ENCODE measurements at regions of chr6 and their contacts with region 1.

Region 1: DNA sequence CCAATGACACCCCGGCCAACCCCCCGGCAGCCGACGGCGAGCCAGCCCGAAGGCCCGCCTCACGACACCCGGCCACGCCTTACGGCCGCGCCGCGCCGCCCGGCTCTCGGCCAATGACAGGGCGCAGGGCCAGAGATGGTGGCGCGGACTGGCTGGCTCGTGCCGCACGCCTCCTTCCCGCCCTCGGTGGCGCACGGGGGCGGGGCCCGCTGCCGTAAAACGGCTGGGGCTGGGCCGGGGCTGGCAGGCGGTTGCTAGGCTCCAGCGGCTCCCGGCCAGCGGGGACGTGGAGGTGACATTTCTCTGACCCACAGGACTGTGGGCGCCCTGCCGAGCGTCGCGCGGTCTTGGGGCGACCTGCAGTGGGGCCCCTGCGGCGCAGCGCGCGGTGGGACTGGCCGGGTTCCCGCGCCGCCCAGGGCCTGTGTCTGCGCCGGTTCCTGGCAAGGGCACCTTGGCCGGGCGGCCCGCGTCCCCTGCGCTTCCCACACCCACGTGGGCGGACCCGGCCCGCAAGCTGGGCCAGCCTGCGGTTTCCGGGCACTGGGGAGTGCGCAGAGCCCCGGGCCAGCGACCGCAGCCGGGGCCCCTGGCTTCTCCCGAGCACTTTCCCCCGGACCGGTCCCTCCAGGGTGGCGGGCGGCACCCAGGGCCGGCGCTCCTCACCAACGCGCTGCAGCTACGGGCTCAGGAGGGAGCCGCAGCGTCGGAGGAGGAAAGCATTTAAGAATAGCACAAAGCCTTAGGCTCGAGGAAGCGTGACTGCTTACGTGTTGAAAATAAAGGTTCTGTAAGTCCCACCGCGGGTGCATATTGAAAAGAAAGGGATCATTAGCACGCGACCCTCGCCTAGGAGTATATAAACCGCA is at the start of gene MPC1:
- DNase-seq: peak in 1 of 2 donors; percentile 96
- H3K4me3 ChIP-seq: peak within 1 kb of the TSS; percentile 91 to 95
- H3K27ac ChIP-seq: peak within 1 kb of the TSS; percentile 89
- H3K4me1 ChIP-seq: peaks cover 18% of the 10 kb centered on the region
- H3K27me3 ChIP-seq: no peaks in the 10 kb centered on the region
- CTCF ChIP-seq: no peak
- POLR2A ChIP-seq: no peak
- total RNA-seq, gene MPC1: 44.0 TPM

Region 2: GRCh38 chr6:166333172-166333995 is 49.8 kb before region 1 on chr6:
- intact Hi-C with region 1: loop called (anchors 10 kb)
- DNase-seq: no peak
- H3K4me3 ChIP-seq: no peak overlapping the region
- H3K27ac ChIP-seq: no peak overlapping the region
- H3K4me1 ChIP-seq: peaks cover 21% of the 10 kb centered on the region
- H3K27me3 ChIP-seq: no peaks in the 10 kb centered on the region
- CTCF ChIP-seq: no peak
- POLR2A ChIP-seq: no peak

Region 3: DNA sequence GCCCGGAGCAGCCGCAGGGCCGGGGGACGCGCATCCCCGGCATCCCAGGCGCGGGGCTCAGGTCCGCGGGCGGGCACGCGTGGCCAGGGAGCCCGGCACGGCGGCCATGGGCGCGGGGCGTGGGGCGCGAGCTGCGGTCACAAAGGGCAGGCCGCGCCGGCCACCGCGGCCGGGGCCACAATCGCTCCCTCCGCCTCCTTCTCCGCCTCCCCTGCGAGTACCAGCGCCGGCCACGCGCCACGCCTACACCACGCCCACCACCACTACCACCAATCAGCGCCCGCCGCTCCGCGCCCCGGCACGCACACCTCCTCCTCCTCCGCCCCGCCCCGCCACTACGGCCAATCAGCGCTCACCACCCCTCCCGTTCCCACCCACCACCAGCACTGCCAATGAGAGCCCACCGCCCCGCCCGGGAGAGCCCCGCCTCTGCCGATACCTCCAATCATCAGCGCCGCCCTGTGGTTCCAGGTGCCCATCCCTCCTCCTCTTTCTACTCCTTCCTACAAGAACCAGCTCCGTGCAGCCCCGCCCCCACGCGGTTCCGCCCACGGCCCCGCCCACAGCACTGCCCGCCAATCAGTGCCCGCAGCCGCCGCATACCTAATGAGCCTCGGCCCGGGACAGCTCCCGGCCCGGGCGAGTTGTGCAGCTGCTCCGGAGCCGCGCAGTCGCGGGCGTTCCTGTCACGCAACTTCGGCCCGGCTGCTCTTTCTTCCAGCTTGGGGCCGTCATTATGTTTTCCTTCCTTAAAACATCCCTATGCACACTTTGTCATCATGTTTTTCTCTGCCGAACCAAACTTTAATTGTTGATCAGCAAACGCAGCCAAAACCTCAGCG is 244.1 kb after region 1 on chr6 and contains the start of gene RPS6KA2:
- intact Hi-C with region 1: loop called (anchors 5 kb)
- DNase-seq: peak; percentile 100
- H3K4me3 ChIP-seq: peak within 1 kb of the TSS; percentile 84 to 91
- H3K27ac ChIP-seq: peak within 1 kb of the TSS; percentile 86
- H3K4me1 ChIP-seq: peaks cover 57% of the 10 kb centered on the region
- H3K27me3 ChIP-seq: no peaks in the 10 kb centered on the region
- CTCF ChIP-seq: no peak
- POLR2A ChIP-seq: peak; percentile 66 to 93
- total RNA-seq, gene RPS6KA2: 65.1 TPM

Measured in vagina (tissue), 2 donors.